Prostate gland (tissue), 2 donors: ENCODE measurements at regions of chr10 and their contacts with region 1.

Region 1: DNA sequence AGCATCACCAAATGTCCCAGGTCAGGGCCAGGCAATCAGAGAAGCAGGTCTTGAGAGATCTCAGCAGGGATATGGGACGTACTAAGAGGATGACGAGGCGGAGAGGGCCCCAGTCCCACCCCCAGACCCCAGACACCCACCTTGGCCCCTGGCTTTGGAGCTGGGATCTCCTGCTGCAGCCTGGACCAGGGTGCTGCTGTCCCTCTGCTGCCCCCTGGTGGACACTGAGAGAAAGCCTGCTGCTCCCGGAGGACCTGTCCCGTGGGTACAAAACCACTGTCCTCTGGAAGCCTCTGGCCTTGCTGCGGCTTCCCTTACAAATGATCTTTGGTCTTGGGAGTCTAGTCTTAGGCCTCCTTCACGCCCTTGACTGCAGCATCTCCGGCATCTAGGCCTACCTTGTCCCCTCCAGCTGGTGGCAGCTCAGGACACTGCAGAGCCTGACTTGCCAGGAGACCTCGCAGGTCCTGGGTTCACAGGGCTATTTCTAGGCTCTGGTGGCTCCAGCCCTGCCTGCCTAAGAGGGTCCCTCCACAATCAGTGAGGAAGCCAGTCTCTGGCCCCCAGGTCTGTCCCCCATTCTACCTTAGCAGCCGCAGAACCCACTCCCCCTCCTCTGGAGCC is 97.1 kb downstream of the RGS10 start:
- DNase-seq: peak; percentile 83
- H3K4me3 ChIP-seq: no peak overlapping the region
- H3K27ac ChIP-seq: no peak overlapping the region
- H3K4me1 ChIP-seq: no peaks in the 10 kb centered on the region
- H3K27me3 ChIP-seq: no peaks in the 10 kb centered on the region
- CTCF ChIP-seq: peak; percentile 86 to 99 (median 92)
- POLR2A ChIP-seq: no peak

Region 2: DNA sequence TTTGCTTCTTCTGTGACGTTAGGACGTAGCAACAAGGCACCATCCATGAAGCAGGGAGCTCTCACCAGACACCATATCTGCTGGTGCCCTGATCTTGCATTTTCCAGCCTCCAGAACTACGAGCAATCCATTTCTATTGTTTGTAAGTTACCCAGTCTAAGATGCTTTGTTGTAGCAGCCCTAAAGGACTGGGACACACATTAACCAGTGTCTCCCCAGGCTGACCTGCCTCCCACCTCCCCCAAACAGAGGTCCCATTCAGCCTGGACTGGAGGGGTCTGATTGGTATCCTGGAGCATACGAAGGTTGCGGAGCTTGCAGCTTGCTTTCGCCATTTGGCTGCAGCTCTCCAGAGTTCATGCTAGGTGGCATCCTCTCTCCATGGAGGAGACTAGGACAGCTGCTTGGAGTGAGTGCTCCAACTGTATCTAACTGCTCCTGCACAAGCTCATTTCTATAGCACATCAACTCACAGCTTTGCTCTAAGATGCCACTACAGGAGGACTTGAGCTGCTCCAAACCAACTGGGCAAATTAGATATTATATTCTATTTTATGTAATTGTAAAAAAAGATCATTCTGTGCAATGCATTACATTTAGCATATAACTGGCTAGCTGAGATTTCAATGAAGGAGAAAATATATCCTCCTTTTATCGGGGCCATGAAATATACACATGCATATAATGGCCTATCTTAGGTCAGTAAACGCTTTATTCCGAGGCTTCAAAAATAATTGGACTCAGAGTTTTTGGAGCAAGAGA is 246.0 kb before region 1 on chr10:
- intact Hi-C with region 1: loop called (anchors 2 kb)
- DNase-seq: peak; percentile 46
- H3K4me3 ChIP-seq: no peak overlapping the region
- H3K27ac ChIP-seq: no peak overlapping the region
- H3K4me1 ChIP-seq: no peaks in the 10 kb centered on the region
- H3K27me3 ChIP-seq: no peaks in the 10 kb centered on the region
- CTCF ChIP-seq: peak in 3 of 4 experiments; percentile 20 to 75 (median 65)
- POLR2A ChIP-seq: no peak

Region 3: GRCh38 chr10:119494236-119495060 is 49.0 kb after region 1 on chr10:
- intact Hi-C with region 1: loop called (anchors 5 kb)
- DNase-seq: peak; percentile 33
- H3K4me3 ChIP-seq: no peak overlapping the region
- H3K27ac ChIP-seq: peak overlapping the region; percentile 15 to 26
- H3K4me1 ChIP-seq: peaks cover 4% of the 10 kb centered on the region
- H3K27me3 ChIP-seq: no peaks in the 10 kb centered on the region
- CTCF ChIP-seq: no peak
- POLR2A ChIP-seq: no peak

Region 4: GRCh38 chr10:119686439-119687191 is 241.2 kb after region 1 on chr10:
- intact Hi-C with region 1: no loop called
- DNase-seq: peak; percentile 63
- H3K4me3 ChIP-seq: peak overlapping the region in 1 of 2 donors; percentile 13
- H3K27ac ChIP-seq: peak overlapping the region; percentile 59 to 65
- H3K4me1 ChIP-seq: peaks cover 4% of the 10 kb centered on the region
- H3K27me3 ChIP-seq: no peaks in the 10 kb centered on the region
- CTCF ChIP-seq: peak; percentile 87 to 94 (median 91)
- POLR2A ChIP-seq: no peak